Sigmoid colon (tissue), 7 donors: ENCODE measurements at regions of chr7 and their contacts with region 1.

Region 1: GRCh38 chr7:56106108-56107073 is at the start of gene CHCHD2:
- DNase-seq: peak; percentile 99
- H3K4me3 ChIP-seq: peak within 1 kb of the TSS; percentile 81 to 96 (median 88)
- H3K27ac ChIP-seq: peak within 1 kb of the TSS; percentile 90 to 98 (median 94)
- H3K4me1 ChIP-seq: peaks cover 0 to 25% (median 15%) of the 10 kb centered on the region in 4 donors
- H3K27me3 ChIP-seq: no peaks in the 10 kb centered on the region
- CTCF ChIP-seq: no peak
- EP300 ChIP-seq: no peak
- POLR2A ChIP-seq: peak; percentile 84 to 92
- total RNA-seq, gene CHCHD2: 315 to 508 (median 451) TPM

Region 2: GRCh38 chr7:55651057-55651456 is 455.3 kb before region 1 on chr7:
- intact Hi-C with region 1: no loop called
- DNase-seq: no peak
- H3K4me3 ChIP-seq: no peak overlapping the region
- H3K27ac ChIP-seq: no peak overlapping the region
- H3K4me1 ChIP-seq: no peaks in the 10 kb centered on the region
- H3K27me3 ChIP-seq: no peaks in the 10 kb centered on the region
- CTCF ChIP-seq: no peak
- EP300 ChIP-seq: no peak
- POLR2A ChIP-seq: no peak

Region 3: GRCh38 chr7:56062382-56062781 is 44.0 kb before region 1 on chr7:
- intact Hi-C with region 1: no loop called
- DNase-seq: no peak
- H3K4me3 ChIP-seq: no peak overlapping the region
- H3K27ac ChIP-seq: peak overlapping the region in 1 of 4 donors; percentile 95
- H3K4me1 ChIP-seq: peaks cover 0 to 13% (median 12%) of the 10 kb centered on the region in 4 donors
- H3K27me3 ChIP-seq: no peaks in the 10 kb centered on the region
- CTCF ChIP-seq: no peak
- EP300 ChIP-seq: no peak
- POLR2A ChIP-seq: no peak

Region 4: DNA sequence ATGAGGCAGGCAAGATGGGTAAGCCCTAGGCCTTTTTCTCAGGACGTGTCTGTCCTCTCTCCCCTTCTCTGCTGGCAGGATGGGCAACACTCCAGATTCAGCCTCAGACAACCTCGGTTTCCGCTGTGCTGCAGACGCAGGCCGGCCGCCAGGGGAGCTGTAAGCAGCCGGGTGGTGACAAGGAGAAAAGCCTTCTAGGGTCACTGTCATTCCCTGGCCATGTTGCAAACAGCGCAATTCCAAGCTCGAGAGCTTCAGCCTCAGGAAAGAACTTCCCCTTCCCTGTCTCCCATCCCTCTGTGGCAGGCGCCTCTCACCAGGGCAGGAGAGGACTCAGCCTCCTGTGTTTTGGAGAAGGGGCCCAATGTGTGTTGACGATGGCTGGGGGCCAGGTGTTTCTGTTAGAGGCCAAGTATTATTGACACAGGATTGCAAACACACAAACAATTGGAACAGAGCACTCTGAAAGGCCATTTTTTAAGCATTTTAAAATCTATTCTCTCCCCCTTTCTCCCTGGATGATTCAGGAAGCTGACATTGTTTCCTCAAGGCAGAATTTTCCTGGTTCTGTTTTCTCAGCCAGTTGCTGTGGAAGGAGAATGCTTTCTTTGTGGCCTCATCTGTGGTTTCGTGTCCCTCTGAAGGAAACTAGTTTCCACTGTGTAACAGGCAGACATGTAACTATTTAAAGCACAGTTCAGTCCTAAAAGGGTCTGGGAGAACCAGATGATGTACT is 26.8 kb before region 1 on chr7:
- intact Hi-C with region 1: loop called (anchors 2 kb)
- DNase-seq: peak; percentile 94
- H3K4me3 ChIP-seq: no peak overlapping the region
- H3K27ac ChIP-seq: peak overlapping the region; percentile 70 to 86 (median 82)
- H3K4me1 ChIP-seq: peaks cover 0 to 38% (median 36%) of the 10 kb centered on the region in 4 donors
- H3K27me3 ChIP-seq: no peaks in the 10 kb centered on the region
- CTCF ChIP-seq: peak; percentile 69 to 80 (median 76)
- EP300 ChIP-seq: no peak
- POLR2A ChIP-seq: no peak